ENCODE measurements at regions of chr14 and their contacts with region 1.

Region 1: GRCh38 chr14:77880056-77880455 is 80.1 kb downstream of the ADCK1 start:
- DNase-seq: no peak
- H3K4me3 ChIP-seq: no peak overlapping the region
- H3K27ac ChIP-seq: no peak overlapping the region
- H3K4me1 ChIP-seq: no peaks in the 10 kb centered on the region
- H3K27me3 ChIP-seq: no peaks in the 10 kb centered on the region
- CTCF ChIP-seq: no peak
- POLR2A ChIP-seq: no peak

Region 2: DNA sequence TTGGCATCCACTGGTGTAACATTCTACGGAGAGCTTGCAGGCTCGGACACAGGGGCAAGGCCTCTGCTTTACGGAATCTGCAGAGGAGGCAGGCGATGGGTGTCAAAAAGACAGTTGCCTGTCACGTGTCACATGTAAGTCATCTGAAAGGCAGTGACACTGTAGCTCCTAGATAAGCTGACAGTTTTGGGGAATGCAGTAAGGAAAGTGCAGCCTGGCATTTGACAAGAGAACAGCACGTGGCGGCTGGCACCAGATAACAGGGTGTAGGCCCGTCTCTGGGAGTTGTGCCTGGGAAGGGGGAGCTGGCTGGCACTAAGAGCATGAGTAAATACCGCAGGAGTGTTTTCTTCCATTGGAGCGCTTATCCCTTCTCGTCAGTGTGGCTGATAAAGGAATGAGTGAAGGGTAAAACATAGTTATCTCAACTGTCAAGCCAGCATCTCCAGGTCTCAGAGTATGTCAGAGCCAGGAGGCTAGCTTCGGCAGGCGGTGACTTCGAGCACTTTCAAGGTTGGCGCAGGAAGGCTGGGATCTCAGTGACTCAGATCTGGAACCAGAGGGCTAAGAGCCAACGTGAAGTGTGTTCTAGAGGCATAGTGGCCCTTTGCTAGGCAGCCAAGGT is 54.0 kb before region 1 on chr14:
- CTCF ChIA-PET with region 1: no interaction called
- POLR2A ChIA-PET with region 1: no interaction called
- dilution Hi-C with region 1: no loop called
- intact Hi-C with region 1: no loop called
- DNase-seq: no peak
- H3K4me3 ChIP-seq: no peak overlapping the region
- H3K27ac ChIP-seq: no peak overlapping the region
- H3K4me1 ChIP-seq: no peaks in the 10 kb centered on the region
- H3K27me3 ChIP-seq: no peaks in the 10 kb centered on the region
- CTCF ChIP-seq: no peak
- POLR2A ChIP-seq: no peak

Region 3: DNA sequence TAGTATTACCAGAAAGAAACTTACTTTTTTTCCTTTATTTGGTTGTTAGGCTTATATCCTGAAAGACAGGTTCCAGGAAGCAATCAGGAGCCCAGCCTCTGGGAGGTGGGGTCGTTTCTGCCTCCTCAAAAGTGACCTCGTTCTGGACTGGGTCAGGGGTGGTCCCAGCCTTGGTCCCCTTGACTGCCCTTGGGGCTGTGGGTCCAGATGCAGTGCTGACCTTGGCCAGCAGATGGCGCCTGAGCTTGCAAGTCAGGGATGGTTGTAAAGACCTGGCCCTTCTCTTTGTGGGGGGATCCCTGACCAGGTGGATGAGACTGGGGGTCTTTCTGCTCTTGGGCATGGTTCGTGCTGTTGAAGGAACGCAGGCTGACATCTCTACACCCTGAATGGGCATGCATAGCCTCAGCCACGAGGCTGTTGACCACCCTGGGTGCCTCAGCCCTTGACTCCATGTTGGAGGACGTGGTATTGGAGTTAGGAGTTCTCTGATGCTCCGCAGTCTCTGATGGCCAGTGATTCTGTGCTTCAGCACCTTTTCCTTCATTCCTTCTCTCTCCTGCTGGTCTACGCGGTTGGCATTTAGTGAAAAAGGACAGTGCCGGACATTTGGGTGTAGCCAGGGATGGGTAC is 17.8 kb before region 1 on chr14:
- CTCF ChIA-PET with region 1: interaction called, 10 read pairs
- POLR2A ChIA-PET with region 1: no interaction called
- dilution Hi-C with region 1: no loop called
- intact Hi-C with region 1: no loop called
- DNase-seq: peak; percentile 57
- H3K4me3 ChIP-seq: no peak overlapping the region
- H3K27ac ChIP-seq: no peak overlapping the region
- H3K4me1 ChIP-seq: no peaks in the 10 kb centered on the region
- H3K27me3 ChIP-seq: no peaks in the 10 kb centered on the region
- CTCF ChIP-seq: peak; percentile 97 to 99
- POLR2A ChIP-seq: no peak